GM12878 (cell line): ENCODE measurements at regions of chr17 and their contacts with region 1.

Region 1: DNA sequence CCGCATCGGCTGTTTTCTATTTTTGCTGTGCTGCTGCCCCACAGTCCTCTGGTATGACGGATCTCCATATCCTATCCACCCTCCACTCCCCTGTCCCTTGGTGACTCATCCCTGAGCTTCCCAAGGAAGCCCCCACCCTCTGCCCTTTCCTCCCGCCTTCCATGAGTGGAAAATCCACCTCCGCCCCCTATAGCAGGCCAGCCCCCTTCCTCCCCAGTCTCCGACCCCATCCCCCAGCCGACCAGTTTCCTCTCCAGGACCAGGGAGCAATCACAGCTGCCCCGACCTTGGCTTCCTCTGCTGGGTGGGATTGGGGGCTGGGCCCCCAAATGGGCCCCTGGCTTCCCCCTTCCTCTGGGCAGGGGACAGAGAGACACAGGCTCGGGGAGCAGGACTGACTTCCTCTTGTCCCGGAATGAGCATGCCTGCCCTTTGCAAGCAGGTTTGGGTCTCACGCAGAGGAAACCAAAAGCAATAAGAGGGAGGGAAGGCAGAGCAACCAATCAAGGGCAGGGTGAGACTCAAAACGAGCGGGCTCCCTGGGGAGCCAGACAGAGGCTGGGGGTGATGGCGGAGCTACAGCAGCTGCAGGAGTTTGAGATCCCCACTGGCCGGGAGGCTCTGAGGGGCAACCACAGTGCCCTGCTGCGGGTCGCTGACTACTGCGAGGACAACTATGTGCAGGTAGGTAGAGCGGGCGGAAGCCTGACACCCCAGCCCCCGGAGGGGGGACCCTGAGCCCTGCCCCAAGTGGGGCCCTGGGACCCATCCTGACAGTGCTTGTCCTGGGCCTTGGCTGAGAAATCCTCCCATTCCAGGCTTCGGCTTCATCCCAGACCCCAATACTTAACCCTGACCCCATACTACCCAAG is at the starts of genes ABI3 and GNGT2:
- DNase-seq: peak; percentile 92
- ATAC-seq: peak; percentile 90
- H3K4me3 ChIP-seq: peak within 1 kb of the TSS; percentile 98
- H3K27ac ChIP-seq: peak within 1 kb of the TSS; percentile 96
- H3K4me1 ChIP-seq: peaks cover 29% of the 10 kb centered on the region
- H3K27me3 ChIP-seq: no peaks in the 10 kb centered on the region
- CTCF ChIP-seq: no peak
- EP300 ChIP-seq: peak; percentile 29; a peak in 2 of 4 replicates
- POLR2A ChIP-seq: peak; percentile 97
- RAD21 ChIP-seq: peak; percentile 16; the same call in 1 of the 2 replicates
- polyA plus RNA-seq, gene ABI3: 13.4 to 21.7 TPM
- polyA plus RNA-seq, gene GNGT2: 15.3 to 22.6 TPM

Region 2: GRCh38 chr17:49093082-49093741 is 117.2 kb before region 1 on chr17:
- CTCF ChIA-PET with region 1: no interaction called
- POLR2A ChIA-PET with region 1: no interaction called
- RAD21 ChIA-PET with region 1: no interaction called
- SMC1A ChIA-PET with region 1: no interaction called
- in situ Hi-C with region 1: no loop called
- intact Hi-C with region 1: no loop called
- DNase-seq: no peak
- ATAC-seq: no peak
- H3K4me3 ChIP-seq: no peak overlapping the region
- H3K27ac ChIP-seq: no peak overlapping the region
- H3K4me1 ChIP-seq: no peaks in the 10 kb centered on the region
- H3K27me3 ChIP-seq: no peaks in the 10 kb centered on the region; a peak in 1 of 4 replicates
- CTCF ChIP-seq: no peak
- EP300 ChIP-seq: no peak
- POLR2A ChIP-seq: no peak
- RAD21 ChIP-seq: no peak

Region 3: DNA sequence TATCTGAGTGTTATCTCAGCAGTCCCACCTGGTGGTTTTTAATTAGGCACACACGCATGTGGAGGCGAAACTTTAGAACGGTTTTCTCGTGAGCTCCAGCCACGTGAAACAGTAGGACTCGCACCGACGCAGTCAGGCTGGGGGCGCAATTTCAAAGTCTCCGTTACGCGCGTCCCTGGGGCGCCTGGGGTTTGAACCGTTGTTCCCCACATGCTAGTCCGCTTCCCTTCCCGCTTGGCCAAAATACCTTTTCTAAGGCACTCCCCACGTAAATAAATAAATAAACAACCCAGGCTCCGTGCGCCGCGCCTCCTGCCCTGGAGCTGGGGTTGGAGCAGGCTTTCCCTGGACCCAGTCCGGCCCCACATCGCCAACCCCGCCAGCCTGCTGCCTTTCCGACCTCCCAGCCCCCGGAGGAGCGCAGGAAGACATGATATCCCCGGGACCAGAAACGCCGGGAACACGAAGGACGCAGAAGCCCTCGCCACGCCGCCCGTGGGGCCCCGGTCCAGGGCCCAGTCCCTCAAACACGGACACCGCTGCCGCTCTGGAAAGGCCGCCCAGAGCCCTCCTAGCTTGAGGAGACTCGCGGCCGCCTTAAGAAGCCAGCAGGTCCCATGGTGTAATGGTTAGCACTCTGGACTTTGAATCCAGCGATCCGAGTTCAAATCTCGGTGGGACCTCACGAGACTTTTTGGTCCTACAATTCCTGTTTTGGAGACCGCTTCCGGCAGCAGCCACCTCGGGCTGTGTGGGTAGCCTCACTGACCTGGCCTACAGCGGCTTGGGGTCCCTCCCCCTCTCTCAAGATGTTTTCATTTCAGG is 18.3 kb before region 1 on chr17:
- CTCF ChIA-PET with region 1: interaction called, 127 read pairs
- POLR2A ChIA-PET with region 1: interaction called, 537 read pairs
- RAD21 ChIA-PET with region 1: interaction called, 355 read pairs
- SMC1A ChIA-PET with region 1: interaction called, 354 read pairs
- in situ Hi-C with region 1: no loop called
- intact Hi-C with region 1: loop called (anchors 1 kb)
- DNase-seq: peak; percentile 77
- ATAC-seq: peak; percentile 63
- H3K4me3 ChIP-seq: peak overlapping the region; percentile 85
- H3K27ac ChIP-seq: peak overlapping the region; percentile 98
- H3K4me1 ChIP-seq: peaks cover 28% of the 10 kb centered on the region
- H3K27me3 ChIP-seq: no peaks in the 10 kb centered on the region
- CTCF ChIP-seq: peak; percentile 32 to 54 (median 37); a peak in 4 of 6 replicates
- EP300 ChIP-seq: peak in 1 of 2 experiments; percentile 72; a peak in 1 of 4 replicates
- POLR2A ChIP-seq: peak; percentile 24; the same call in 1 of the 2 replicates
- RAD21 ChIP-seq: peak; percentile 14; the same call in 1 of the 2 replicates

Region 4: DNA sequence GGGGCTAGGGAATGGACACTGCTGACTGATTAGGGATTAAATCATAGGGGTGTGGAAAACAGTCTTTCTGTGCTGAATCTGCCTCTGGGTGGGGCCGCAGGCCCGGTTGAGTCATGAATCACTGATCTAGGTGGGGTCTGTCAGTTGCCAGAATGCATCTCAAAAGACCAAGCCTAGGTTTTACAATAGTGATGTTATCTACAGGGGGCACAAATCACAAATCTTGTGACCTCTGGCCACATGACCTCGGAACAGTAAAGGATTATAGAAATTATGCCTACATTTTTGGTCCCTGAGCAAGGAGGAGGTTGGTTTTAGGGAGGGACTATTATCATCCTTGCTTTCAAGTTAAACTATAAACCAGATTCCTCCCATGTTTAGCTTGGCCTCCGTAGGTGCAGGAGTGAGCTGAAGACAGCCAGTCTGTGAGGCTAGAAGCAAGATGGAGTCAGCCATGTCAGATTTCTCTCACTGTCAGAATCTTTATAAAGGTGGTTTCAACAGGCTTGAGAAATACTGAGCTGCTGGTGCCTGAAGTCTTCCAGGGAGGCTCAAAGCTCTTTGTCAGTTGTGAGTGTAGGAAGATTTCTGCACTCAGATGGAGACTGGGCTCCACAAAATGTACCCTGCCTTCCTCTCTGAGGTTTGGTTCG is 12.9 kb before region 1 on chr17:
- CTCF ChIA-PET with region 1: interaction called, 127 read pairs
- POLR2A ChIA-PET with region 1: interaction called, 537 read pairs
- RAD21 ChIA-PET with region 1: interaction called, 355 read pairs
- SMC1A ChIA-PET with region 1: interaction called, 354 read pairs
- in situ Hi-C with region 1: no loop called
- intact Hi-C with region 1: loop called (anchors 1 kb)
- DNase-seq: no peak
- ATAC-seq: no peak
- H3K4me3 ChIP-seq: no peak overlapping the region
- H3K27ac ChIP-seq: no peak overlapping the region
- H3K4me1 ChIP-seq: peaks cover 28% of the 10 kb centered on the region
- H3K27me3 ChIP-seq: no peaks in the 10 kb centered on the region
- CTCF ChIP-seq: no peak
- EP300 ChIP-seq: no peak
- POLR2A ChIP-seq: no peak
- RAD21 ChIP-seq: no peak

Region 5: DNA sequence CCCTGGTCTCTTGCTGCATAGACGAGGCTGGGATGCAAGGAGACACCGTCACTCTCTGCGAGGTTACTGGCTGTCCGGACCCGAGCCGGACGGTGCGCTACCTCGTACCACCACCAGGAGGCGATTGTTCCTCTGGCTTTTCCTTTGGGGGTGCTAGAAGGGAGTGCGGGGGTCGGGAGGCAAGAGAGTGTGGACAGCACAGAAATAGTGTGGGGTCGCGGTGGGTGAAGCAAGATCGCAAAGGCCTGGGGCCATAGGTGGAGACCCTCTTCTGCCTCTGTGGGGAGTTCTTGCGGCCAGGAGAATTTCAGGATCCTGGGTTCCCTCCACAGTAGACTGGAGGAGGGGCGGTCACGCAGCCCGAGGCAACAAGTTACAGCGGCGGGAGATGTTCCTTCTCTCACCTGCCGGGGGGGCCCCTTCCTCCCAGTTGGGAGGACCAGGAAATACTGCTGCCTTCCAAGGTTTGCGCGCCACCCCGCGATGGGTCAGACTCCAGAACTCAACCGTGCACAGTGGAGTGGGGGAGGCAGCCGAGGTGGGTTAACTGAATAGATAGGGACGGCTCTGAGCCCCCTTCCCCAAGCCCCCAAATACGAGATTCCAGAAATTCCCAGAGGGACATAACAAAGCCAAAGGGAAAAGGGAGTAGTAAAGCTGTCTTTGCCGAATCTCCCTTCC is 13.3 kb after region 1 on chr17:
- CTCF ChIA-PET with region 1: interaction called, 61 read pairs
- POLR2A ChIA-PET with region 1: interaction called, 12 read pairs
- RAD21 ChIA-PET with region 1: interaction called, 51 read pairs
- SMC1A ChIA-PET with region 1: interaction called, 22 read pairs
- in situ Hi-C with region 1: no loop called
- intact Hi-C with region 1: no loop called
- DNase-seq: no peak
- ATAC-seq: peak; percentile 28
- H3K4me3 ChIP-seq: peak overlapping the region; percentile 48; the same call in 1 of the 2 replicates
- H3K27ac ChIP-seq: no peak overlapping the region
- H3K4me1 ChIP-seq: peaks cover 41% of the 10 kb centered on the region
- H3K27me3 ChIP-seq: no peaks in the 10 kb centered on the region
- CTCF ChIP-seq: peak; percentile 66 to 88 (median 86)
- EP300 ChIP-seq: no peak
- POLR2A ChIP-seq: peak; percentile 63
- RAD21 ChIP-seq: peak; percentile 42

Region 6: DNA sequence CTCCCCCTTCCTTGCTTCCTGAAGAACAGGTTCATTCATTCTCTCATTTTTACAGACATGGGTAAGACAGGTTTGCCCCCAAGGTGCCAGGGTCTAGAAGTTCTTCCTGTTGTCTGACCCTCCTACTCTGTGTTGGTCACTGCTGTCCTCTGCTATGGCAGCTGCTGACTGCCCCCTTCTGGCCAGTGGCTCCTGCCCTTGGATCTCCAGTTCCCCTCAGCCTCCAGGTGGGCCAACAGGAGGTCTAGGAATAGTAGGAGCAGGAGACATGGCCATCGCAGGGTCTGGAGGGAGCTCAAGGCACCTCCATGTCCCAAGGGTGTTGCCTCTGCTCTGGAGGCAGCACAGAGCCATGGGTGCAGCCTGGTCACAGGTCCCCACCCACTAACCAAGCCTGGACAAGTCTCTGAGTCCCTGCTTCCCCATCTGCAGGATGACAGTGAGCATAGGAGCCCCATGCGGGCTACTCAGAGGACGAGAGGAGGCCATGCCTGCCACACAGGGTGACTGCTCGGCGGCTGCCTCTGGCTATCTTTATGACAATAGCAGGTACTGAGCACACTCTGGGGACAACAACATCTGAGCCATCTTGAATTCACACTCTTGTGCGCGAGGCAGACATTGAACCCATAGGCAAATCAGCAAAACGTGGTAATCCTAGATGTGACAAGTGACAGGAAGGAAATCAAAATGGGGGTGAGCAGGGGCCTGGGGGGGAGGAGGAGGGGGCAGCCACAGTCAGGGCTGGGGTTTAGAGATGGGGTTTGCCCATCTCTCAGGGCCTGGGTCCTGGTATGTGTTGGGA is 338.3 kb after region 1 on chr17:
- CTCF ChIA-PET with region 1: no interaction called
- POLR2A ChIA-PET with region 1: no interaction called
- RAD21 ChIA-PET with region 1: no interaction called
- SMC1A ChIA-PET with region 1: no interaction called
- in situ Hi-C with region 1: no loop called
- intact Hi-C with region 1: no loop called
- DNase-seq: no peak
- ATAC-seq: peak; percentile 81
- H3K4me3 ChIP-seq: no peak overlapping the region
- H3K27ac ChIP-seq: no peak overlapping the region
- H3K4me1 ChIP-seq: no peaks in the 10 kb centered on the region
- H3K27me3 ChIP-seq: 0 out of 4 replicates have a peak, but pooled peaks cover 0 to 2% of the 10 kb centered on the region in 2 experiments
- CTCF ChIP-seq: peak; percentile 44 to 57 (median 50); a peak in 4 of 6 replicates
- EP300 ChIP-seq: no peak
- POLR2A ChIP-seq: no peak
- RAD21 ChIP-seq: peak; percentile 69